Activated naive CD4-positive, alpha-beta T cell treated with anti-CD3 and anti-CD28 coated beads for 36 hours (primary cell): ENCODE measurements at regions of chr3 and their contacts with region 1.

Region 1: GRCh38 chr3:47824541-47825473 is 21.9 kb downstream of the DHX30 start:
- DNase-seq: peak; percentile 77
- H3K4me3 Mint-ChIP-seq: peak overlapping the region; percentile 86
- H3K27ac Mint-ChIP-seq: peak overlapping the region; percentile 84
- H3K4me1 Mint-ChIP-seq: peaks cover 34% of the 10 kb centered on the region
- H3K27me3 Mint-ChIP-seq: no peaks in the 10 kb centered on the region

Region 2: GRCh38 chr3:47731061-47731460 is 93.7 kb before region 1 on chr3:
- CTCF ChIA-PET with region 1: no interaction called
- intact Hi-C with region 1: no loop called
- DNase-seq: no peak
- H3K4me3 Mint-ChIP-seq: no peak overlapping the region
- H3K27ac Mint-ChIP-seq: no peak overlapping the region
- H3K4me1 Mint-ChIP-seq: peaks cover 2% of the 10 kb centered on the region
- H3K27me3 Mint-ChIP-seq: no peaks in the 10 kb centered on the region

Region 3: GRCh38 chr3:47802734-47803477 is 21.9 kb before region 1 on chr3 and contains the start of gene DHX30:
- CTCF ChIA-PET with region 1: interaction called, 9 read pairs
- intact Hi-C with region 1: loop called (anchors 1 kb)
- DNase-seq: peak; percentile 87
- H3K4me3 Mint-ChIP-seq: peak within 1 kb of the TSS; percentile 96
- H3K27ac Mint-ChIP-seq: peak within 1 kb of the TSS; percentile 92
- H3K4me1 Mint-ChIP-seq: peaks cover 21% of the 10 kb centered on the region
- H3K27me3 Mint-ChIP-seq: no peaks in the 10 kb centered on the region
- total RNA-seq, gene DHX30: 65.6 to 69.9 TPM

Region 4: DNA sequence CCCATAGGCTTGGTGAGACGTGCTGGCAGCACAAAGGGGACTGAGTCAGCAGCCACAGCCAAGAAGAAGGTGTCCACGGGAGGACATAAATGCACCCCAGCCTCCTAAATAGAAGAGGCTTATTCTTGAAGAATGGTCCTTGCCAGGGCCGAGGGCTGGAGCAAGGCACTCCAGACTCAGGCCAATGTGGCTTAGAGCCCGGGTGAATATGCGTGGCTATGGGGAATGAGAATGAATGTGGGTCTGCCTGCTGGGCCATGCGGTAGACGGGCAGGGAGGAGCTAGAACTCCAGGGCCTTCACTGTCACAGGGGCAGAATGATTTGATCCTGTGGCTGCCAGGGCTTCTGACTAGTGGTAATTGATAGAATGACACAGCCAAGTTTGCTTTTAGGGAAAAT is 12.2 kb after region 1 on chr3:
- CTCF ChIA-PET with region 1: interaction called, 25 read pairs
- intact Hi-C with region 1: no loop called
- DNase-seq: no peak
- H3K4me3 Mint-ChIP-seq: no peak overlapping the region
- H3K27ac Mint-ChIP-seq: no peak overlapping the region
- H3K4me1 Mint-ChIP-seq: peaks cover 2% of the 10 kb centered on the region
- H3K27me3 Mint-ChIP-seq: no peaks in the 10 kb centered on the region

Region 5: DNA sequence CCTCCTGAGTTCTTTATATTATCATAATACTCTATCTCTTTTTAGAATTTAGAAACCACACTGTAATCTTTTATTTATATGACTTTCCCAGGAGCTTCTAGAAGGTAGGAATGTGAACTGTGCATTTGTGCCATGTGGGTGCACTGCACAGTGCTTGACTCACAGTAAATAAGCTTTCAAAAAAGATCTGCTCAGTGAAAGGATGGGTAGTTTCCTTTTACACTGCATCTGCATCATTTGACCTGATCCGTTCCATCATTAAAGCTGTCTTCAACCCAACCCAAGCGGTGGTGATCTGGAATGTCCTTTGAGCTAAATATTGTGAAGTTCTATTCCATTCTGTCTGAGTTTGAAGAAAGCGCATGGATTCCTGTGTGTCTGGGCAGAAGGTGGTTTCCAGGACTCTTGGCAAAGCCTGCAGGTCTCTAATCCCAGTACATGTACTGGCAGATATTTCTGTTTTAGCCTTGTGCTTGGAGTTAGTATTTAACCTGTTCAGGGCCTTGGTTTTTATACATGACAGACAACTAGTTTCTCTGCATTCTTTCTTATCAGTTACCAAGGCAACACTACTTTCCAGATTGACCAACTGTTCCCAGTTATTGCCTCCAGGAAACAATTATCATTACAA is 74.8 kb after region 1 on chr3:
- CTCF ChIA-PET with region 1: no interaction called
- intact Hi-C with region 1: no loop called
- DNase-seq: no peak
- H3K4me3 Mint-ChIP-seq: no peak overlapping the region
- H3K27ac Mint-ChIP-seq: no peak overlapping the region
- H3K4me1 Mint-ChIP-seq: peaks cover 10% of the 10 kb centered on the region
- H3K27me3 Mint-ChIP-seq: no peaks in the 10 kb centered on the region

Region 6: GRCh38 chr3:47989981-47990440 is 165.2 kb after region 1 on chr3:
- CTCF ChIA-PET with region 1: interaction called, 16 read pairs
- intact Hi-C with region 1: loop called (anchors 1 kb)
- DNase-seq: peak; percentile 86
- H3K4me3 Mint-ChIP-seq: no peak overlapping the region
- H3K27ac Mint-ChIP-seq: no peak overlapping the region
- H3K4me1 Mint-ChIP-seq: peaks cover 4% of the 10 kb centered on the region
- H3K27me3 Mint-ChIP-seq: no peaks in the 10 kb centered on the region

Region 7: GRCh38 chr3:48151058-48151806 is 326.4 kb after region 1 on chr3:
- CTCF ChIA-PET with region 1: no interaction called
- intact Hi-C with region 1: loop called (anchors 5 kb)
- DNase-seq: peak; percentile 75
- H3K4me3 Mint-ChIP-seq: no peak overlapping the region
- H3K27ac Mint-ChIP-seq: no peak overlapping the region
- H3K4me1 Mint-ChIP-seq: no peaks in the 10 kb centered on the region
- H3K27me3 Mint-ChIP-seq: no peaks in the 10 kb centered on the region

Region 8: GRCh38 chr3:48240711-48241491 is 416.1 kb after region 1 on chr3 and contains the start of gene ZNF589:
- CTCF ChIA-PET with region 1: no interaction called
- intact Hi-C with region 1: loop called (anchors 10 kb)
- DNase-seq: peak; percentile 96
- H3K4me3 Mint-ChIP-seq: peak within 1 kb of the TSS; percentile 88
- H3K27ac Mint-ChIP-seq: peak within 1 kb of the TSS; percentile 86
- H3K4me1 Mint-ChIP-seq: peaks cover 28% of the 10 kb centered on the region
- H3K27me3 Mint-ChIP-seq: no peaks in the 10 kb centered on the region
- total RNA-seq, gene ZNF589: 15.8 to 16.3 TPM